Esophagus squamous epithelium (tissue), 5 donors: ENCODE measurements at regions of chr18 and their contacts with region 1.

Region 1: GRCh38 chr18:48675352-48675761 is 136.5 kb downstream of the CTIF start:
- DNase-seq: peak; percentile 25
- H3K4me3 ChIP-seq: no peak overlapping the region
- H3K27ac ChIP-seq: no peak overlapping the region
- H3K4me1 ChIP-seq: peaks cover 11 to 37% (median 19%) of the 10 kb centered on the region in 3 donors
- H3K27me3 ChIP-seq: no peaks in the 10 kb centered on the region
- CTCF ChIP-seq: peak; percentile 73 to 95 (median 90)
- POLR2A ChIP-seq: no peak

Region 2: DNA sequence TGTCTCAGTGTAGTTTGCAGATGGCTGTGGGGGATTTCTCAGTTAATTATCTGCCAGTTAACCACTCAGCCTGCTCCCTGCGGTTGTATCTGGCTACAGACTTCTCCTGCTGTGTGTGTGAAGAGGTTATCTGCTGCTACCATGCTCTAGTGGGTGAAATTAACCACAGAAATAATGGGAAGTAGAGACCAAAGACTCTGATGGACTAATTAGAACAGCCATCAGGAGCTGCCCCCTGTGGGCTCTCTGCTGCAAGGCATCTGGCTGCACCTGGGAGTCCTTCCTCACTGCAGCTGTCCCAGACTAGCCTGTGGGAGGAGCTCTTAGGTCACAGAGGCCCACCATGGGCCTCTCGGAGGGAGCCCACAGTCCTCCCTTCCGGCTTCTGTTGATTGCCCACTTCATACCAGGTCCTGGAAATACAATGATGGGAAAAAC is 69.9 kb before region 1 on chr18:
- intact Hi-C with region 1: no loop called
- DNase-seq: no peak
- H3K4me3 ChIP-seq: no peak overlapping the region
- H3K27ac ChIP-seq: no peak overlapping the region
- H3K4me1 ChIP-seq: peaks cover 0 to 3% (median 0%) of the 10 kb centered on the region in 3 donors
- H3K27me3 ChIP-seq: no peaks in the 10 kb centered on the region
- CTCF ChIP-seq: peak in 1 of 6 experiments; percentile 16
- POLR2A ChIP-seq: no peak

Region 3: GRCh38 chr18:49041435-49042245 is 366.3 kb after region 1 on chr18:
- intact Hi-C with region 1: loop called (anchors 10 kb)
- DNase-seq: no peak
- H3K4me3 ChIP-seq: no peak overlapping the region
- H3K27ac ChIP-seq: no peak overlapping the region
- H3K4me1 ChIP-seq: peaks cover 0 to 4% (median 0%) of the 10 kb centered on the region in 3 donors
- H3K27me3 ChIP-seq: no peaks in the 10 kb centered on the region
- CTCF ChIP-seq: peak in 5 of 6 experiments; percentile 32 to 68 (median 56)
- POLR2A ChIP-seq: no peak

Region 4: GRCh38 chr18:49189772-49190171 is 514.4 kb after region 1 on chr18:
- intact Hi-C with region 1: loop called (anchors 10 kb)
- DNase-seq: no peak
- H3K4me3 ChIP-seq: no peak overlapping the region
- H3K27ac ChIP-seq: no peak overlapping the region
- H3K4me1 ChIP-seq: peaks cover 0 to 11% (median 0%) of the 10 kb centered on the region in 3 donors
- H3K27me3 ChIP-seq: no peaks in the 10 kb centered on the region
- CTCF ChIP-seq: no peak
- POLR2A ChIP-seq: no peak

Region 5: DNA sequence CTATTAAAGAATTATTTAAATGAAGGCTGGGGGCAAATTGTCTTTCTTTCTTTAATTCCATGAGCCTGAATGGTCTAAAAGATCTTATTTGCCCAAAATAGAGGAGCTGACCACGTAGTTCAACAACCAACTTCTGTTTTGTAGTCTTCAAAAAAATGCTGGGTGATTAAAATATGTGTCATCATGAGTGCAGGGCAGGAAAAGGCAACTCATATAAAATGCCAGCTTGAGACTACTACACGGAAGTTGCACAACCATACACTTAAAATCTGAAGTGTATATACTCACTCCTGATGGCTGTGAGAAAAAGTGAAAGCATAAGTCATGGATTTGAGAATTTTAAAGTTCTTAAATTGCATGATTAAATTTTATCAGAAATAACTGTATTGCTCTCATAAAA is 574.2 kb after region 1 on chr18:
- intact Hi-C with region 1: loop called (anchors 10 kb)
- DNase-seq: no peak
- H3K4me3 ChIP-seq: no peak overlapping the region
- H3K27ac ChIP-seq: peak overlapping the region in 1 of 4 donors; percentile 20
- H3K4me1 ChIP-seq: peaks cover 0 to 18% (median 4%) of the 10 kb centered on the region in 3 donors
- H3K27me3 ChIP-seq: no peaks in the 10 kb centered on the region
- CTCF ChIP-seq: no peak
- POLR2A ChIP-seq: no peak